Heart right ventricle (tissue), 16 donors: ENCODE measurements at regions of chr9 and their contacts with region 1.

Region 1: GRCh38 chr9:129145822-129146292 is 32.2 kb downstream of the IER5L start:
- DNase-seq: peak; percentile 63 to 69
- ATAC-seq: peak in 4 of 8 donors; percentile 3 to 15 (median 11)
- H3K4me3 ChIP-seq: peak overlapping the region in 2 of 10 donors; percentile 6 to 15
- H3K27ac ChIP-seq: peak overlapping the region; percentile 65 to 100 (median 100)
- H3K4me1 ChIP-seq: peaks cover 57 to 77% (median 75%) of the 10 kb centered on the region in 9 donors
- H3K27me3 ChIP-seq: no peaks in the 10 kb centered on the region
- CTCF ChIP-seq: peak in 1 of 9 donors; percentile 8

Region 2: GRCh38 chr9:129164246-129164930 is 18.5 kb after region 1 on chr9:
- intact Hi-C with region 1: loop called in 2 of 10 experiments (anchors 2 kb)
- DNase-seq: peak; percentile 28 to 50
- ATAC-seq: peak; percentile 18 to 73 (median 48)
- H3K4me3 ChIP-seq: no peak overlapping the region
- H3K27ac ChIP-seq: peak overlapping the region; percentile 14 to 87 (median 72)
- H3K4me1 ChIP-seq: peaks cover 11 to 48% (median 24%) of the 10 kb centered on the region in 9 donors
- H3K27me3 ChIP-seq: no peaks in the 10 kb centered on the region
- CTCF ChIP-seq: no peak

Region 3: GRCh38 chr9:129198319-129199011 is 52.6 kb after region 1 on chr9:
- intact Hi-C with region 1: no loop called
- DNase-seq: peak; percentile 54 to 67
- ATAC-seq: peak in 7 of 8 donors; percentile 30 to 70 (median 52)
- H3K4me3 ChIP-seq: peak overlapping the region in 2 of 10 donors; percentile 12 to 14
- H3K27ac ChIP-seq: peak overlapping the region; percentile 63 to 87 (median 78)
- H3K4me1 ChIP-seq: peaks cover 0 to 24% (median 9%) of the 10 kb centered on the region in 9 donors
- H3K27me3 ChIP-seq: peaks cover 0 to 20% (median 9%) of the 10 kb centered on the region in 7 donors
- CTCF ChIP-seq: peak in 2 of 9 donors; percentile 8 to 11

Region 4: GRCh38 chr9:129290621-129291020 is 144.8 kb after region 1 on chr9:
- intact Hi-C with region 1: no loop called
- DNase-seq: no peak
- ATAC-seq: no peak
- H3K4me3 ChIP-seq: no peak overlapping the region
- H3K27ac ChIP-seq: no peak overlapping the region
- H3K4me1 ChIP-seq: no peaks in the 10 kb centered on the region
- H3K27me3 ChIP-seq: no peaks in the 10 kb centered on the region
- CTCF ChIP-seq: no peak